Esophagus muscularis mucosa (tissue), 4 donors: ENCODE measurements at regions of chr22 and their contacts with region 1.

Region 1: GRCh38 chr22:28146401-28147314 is 227.6 kb upstream of the PITPNB start:
- DNase-seq: no peak
- H3K4me3 ChIP-seq: no peak overlapping the region
- H3K27ac ChIP-seq: no peak overlapping the region
- H3K4me1 ChIP-seq: peaks cover 13 to 43% (median 36%) of the 10 kb centered on the region in 4 donors
- H3K27me3 ChIP-seq: no peaks in the 10 kb centered on the region
- CTCF ChIP-seq: no peak
- EP300 ChIP-seq: no peak
- POLR2A ChIP-seq: no peak

Region 2: GRCh38 chr22:28112548-28113043 is 34.1 kb before region 1 on chr22:
- intact Hi-C with region 1: loop called (anchors 5 kb)
- DNase-seq: no peak
- H3K4me3 ChIP-seq: no peak overlapping the region
- H3K27ac ChIP-seq: peak overlapping the region in 3 of 4 donors; percentile 21 to 43 (median 25)
- H3K4me1 ChIP-seq: peaks cover 16 to 41% (median 36%) of the 10 kb centered on the region in 4 donors
- H3K27me3 ChIP-seq: no peaks in the 10 kb centered on the region
- CTCF ChIP-seq: peak; percentile 28 to 55 (median 36)
- EP300 ChIP-seq: no peak
- POLR2A ChIP-seq: no peak

Region 3: DNA sequence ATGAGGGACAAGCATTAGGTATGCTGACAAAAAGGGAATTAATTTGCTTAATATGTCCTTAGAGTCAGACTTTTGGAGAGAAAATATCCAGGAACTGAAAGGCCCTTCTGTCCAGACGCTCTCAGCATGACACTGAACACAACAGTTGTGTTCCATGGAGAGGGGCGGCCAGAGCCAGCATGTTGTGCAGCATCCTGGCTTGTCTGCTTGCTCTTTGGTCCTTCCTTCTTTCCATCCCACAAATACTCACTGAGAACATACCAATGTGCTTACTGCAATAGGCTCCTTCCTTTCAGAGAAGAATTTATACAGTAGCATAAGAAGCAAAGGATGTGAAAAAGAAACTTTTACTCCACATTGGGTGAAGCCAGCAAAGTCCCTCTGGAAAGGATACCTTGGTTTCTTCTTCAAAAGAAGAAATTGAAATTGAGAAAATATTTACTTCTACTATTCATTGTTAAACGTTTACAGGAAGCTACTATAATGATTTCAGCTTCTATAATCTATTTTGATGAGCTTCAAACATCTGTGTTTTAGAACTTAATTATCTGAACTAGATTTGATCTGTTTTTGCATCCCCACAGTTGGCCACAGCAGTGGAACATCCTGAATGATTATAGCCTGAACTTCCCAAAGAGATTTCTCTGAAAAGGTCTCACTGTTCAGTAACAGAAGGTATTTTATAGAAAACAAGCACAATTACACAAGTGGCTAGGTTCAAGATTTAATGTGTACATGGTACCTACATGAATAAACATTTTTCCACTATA is 76.5 kb after region 1 on chr22:
- intact Hi-C with region 1: no loop called
- DNase-seq: no peak
- H3K4me3 ChIP-seq: no peak overlapping the region
- H3K27ac ChIP-seq: no peak overlapping the region
- H3K4me1 ChIP-seq: peaks cover 0 to 6% (median 2%) of the 10 kb centered on the region in 4 donors
- H3K27me3 ChIP-seq: no peaks in the 10 kb centered on the region
- CTCF ChIP-seq: no peak
- EP300 ChIP-seq: no peak
- POLR2A ChIP-seq: no peak

Region 4: DNA sequence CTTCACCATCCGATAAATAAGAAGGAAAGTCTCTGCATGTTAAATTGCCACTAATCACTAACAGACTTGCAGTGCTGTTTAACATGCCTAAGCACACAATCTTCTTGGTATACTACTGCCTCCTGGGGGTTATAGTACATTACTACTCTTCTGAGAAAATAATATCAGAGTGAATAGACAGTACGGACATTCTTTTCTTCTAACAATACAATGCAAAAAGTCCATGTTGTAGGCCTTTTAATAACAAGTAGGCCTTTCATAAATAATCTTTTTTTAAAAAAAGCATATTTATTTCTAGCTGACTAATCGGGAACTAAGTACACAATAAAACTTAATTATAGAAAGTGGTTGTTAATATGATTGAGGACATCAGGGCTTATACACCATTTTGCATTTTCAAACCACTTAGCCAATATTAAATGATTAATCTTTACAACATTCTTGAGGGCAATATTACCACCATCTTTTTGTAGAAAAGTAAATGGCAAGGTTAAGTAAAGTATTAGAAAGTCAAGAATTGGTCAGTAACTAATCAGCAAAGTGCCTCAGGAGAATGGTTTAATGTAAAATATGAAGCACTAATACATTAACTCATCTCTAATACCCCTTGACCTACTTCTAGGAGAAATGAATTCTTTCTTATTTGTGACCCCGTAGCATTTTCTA is 448.3 kb after region 1 on chr22:
- intact Hi-C with region 1: loop called (anchors 10 kb)
- DNase-seq: no peak
- H3K4me3 ChIP-seq: no peak overlapping the region
- H3K27ac ChIP-seq: no peak overlapping the region
- H3K4me1 ChIP-seq: peaks cover 0 to 10% (median 8%) of the 10 kb centered on the region in 4 donors
- H3K27me3 ChIP-seq: no peaks in the 10 kb centered on the region
- CTCF ChIP-seq: peak; percentile 73 to 85 (median 79)
- EP300 ChIP-seq: no peak
- POLR2A ChIP-seq: no peak